AG04450 (cell line): ENCODE measurements at regions of chr2 and their contacts with region 1.

Region 1: DNA sequence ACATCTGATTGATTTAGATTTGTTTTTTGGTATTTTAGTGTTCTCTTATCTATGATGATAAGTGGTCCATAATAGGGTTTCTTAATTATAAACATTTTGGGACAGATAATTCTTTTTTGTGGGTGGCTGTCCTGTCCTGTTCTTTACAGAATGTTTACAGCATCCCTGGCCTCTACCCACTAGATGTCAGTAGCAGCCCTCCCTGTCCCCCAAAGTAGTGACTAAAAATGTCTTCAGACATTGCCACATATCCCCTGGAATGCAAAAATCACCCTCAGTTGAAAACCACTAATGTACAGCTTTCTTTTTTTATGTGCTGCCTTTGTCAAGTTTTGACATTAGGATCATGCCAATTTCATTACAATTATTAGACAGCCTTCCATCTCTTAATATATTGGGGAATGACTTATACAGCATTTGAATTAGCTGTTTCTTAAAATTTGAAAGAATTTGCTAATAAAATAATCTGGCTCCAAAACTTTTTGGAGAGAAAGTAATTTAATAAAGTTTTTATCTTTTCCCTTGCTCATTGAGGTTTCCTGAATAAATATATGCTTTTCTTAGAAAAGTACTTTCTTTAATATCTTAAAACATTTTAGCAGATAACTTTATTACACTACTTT is 19.5 kb downstream of the WIPF1 start:
- DNase-seq: peak; percentile 26
- H3K4me3 ChIP-seq: no peak overlapping the region
- H3K27ac ChIP-seq: no peak overlapping the region
- H3K27me3 ChIP-seq: no peaks in the 10 kb centered on the region
- CTCF ChIP-seq: peak; percentile 67

Region 2: DNA sequence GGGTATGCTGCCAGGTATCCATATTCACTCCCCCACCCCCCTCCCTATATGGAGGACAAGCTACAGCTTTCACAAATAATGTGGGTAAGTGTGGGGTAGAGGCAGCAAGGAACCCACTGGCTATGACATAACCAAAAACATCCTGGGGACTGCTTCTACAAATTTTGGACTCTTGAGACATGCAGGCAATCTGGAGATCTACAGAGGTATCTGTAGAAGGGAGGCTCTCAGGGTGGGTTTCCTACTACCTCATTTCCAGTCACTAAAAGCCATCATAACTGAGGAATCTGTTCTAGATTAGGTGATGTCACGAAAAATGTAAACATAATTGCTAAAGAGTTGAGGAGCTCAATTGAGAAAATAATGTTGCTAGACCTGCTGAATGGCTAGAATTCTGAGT is 66.3 kb after region 1 on chr2:
- CTCF ChIA-PET with region 1: no interaction called
- POLR2A ChIA-PET with region 1: no interaction called
- DNase-seq: no peak
- H3K4me3 ChIP-seq: no peak overlapping the region
- H3K27ac ChIP-seq: no peak overlapping the region
- H3K27me3 ChIP-seq: no peaks in the 10 kb centered on the region
- CTCF ChIP-seq: no peak

Region 3: GRCh38 chr2:174682578-174683391 is 104.7 kb after region 1 on chr2:
- CTCF ChIA-PET with region 1: interaction called, 98 read pairs
- POLR2A ChIA-PET with region 1: no interaction called
- DNase-seq: no peak
- H3K4me3 ChIP-seq: peak overlapping the region; percentile 83
- H3K27ac ChIP-seq: no peak overlapping the region
- H3K27me3 ChIP-seq: peaks cover 3% of the 10 kb centered on the region
- CTCF ChIP-seq: no peak